A549 (cell line): ENCODE measurements at regions of chr12 and their contacts with region 1.

Region 1: DNA sequence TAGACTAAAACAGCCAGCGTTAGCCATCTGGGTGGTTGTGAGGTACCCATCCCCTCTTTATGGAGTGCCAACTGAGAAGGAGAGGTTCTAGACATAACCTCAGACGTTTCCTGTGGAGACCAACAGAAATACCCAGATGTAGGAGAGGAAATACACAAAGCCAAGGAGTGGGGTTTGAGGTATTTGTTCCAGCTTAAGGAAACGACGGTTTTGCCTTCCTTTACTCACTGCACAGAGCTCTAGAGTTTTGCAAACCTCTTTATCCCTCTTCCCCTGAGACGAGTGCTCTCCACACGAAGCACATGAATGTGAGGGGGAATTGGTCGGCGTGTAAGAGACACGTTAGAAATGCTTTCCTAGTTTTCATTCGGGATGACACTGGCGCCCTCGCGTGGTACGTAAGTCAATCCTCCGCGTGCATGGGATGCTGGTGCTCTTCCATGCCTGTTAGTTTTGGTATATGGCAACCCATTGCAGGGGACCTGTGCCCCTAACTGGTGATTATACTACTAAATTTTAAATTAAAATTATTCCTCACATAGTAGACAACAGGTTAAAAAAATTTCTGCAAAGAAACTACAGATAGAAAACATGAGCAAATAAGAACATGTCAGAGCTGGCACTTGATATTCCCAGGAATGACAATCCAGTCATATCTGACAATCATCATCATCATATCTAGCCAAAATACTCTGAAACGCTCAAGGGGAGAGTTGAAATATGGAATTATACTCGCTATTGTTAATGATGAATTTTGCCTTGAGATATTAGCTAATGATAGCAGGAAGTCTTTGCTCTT is 121.7 kb downstream of the PPM1H start:
- DNase-seq: peak; percentile 58 to 83
- ATAC-seq: peak; percentile 92 to 95
- H3K4me3 ChIP-seq: no peak overlapping the region; the same call in 2 of the 3 replicates
- H3K27ac ChIP-seq: peak overlapping the region; percentile 51 to 76; a peak in 5 of 6 replicates
- H3K4me1 ChIP-seq: peaks cover 5% of the 10 kb centered on the region; the same call in 2 of the 3 replicates
- CTCF ChIP-seq: peak; percentile 89
- EP300 ChIP-seq: no peak
- POLR2A ChIP-seq: no peak
- RAD21 ChIP-seq: peak; percentile 89 to 93

Region 2: GRCh38 chr12:62799126-62799736 is 14.0 kb before region 1 on chr12:
- CTCF ChIA-PET with region 1: interaction called, 25 read pairs
- POLR2A ChIA-PET with region 1: no interaction called
- DNase-seq: peak; percentile 60 to 83
- ATAC-seq: peak; percentile 76 to 92
- H3K4me3 ChIP-seq: no peak overlapping the region
- H3K27ac ChIP-seq: peak overlapping the region; percentile 40 to 70
- H3K4me1 ChIP-seq: peaks cover 26% of the 10 kb centered on the region
- CTCF ChIP-seq: peak; percentile 94
- EP300 ChIP-seq: no peak
- POLR2A ChIP-seq: no peak
- RAD21 ChIP-seq: peak; percentile 94 to 98

Region 3: GRCh38 chr12:62848421-62848820 is 35.2 kb after region 1 on chr12:
- CTCF ChIA-PET with region 1: interaction called, 21 read pairs
- POLR2A ChIA-PET with region 1: no interaction called
- DNase-seq: peak; percentile 57 to 82
- ATAC-seq: peak; percentile 85 to 93
- H3K4me3 ChIP-seq: no peak overlapping the region
- H3K27ac ChIP-seq: peak overlapping the region; percentile 43 to 76; a peak in 4 of 6 replicates
- H3K4me1 ChIP-seq: peaks cover 19% of the 10 kb centered on the region
- CTCF ChIP-seq: no peak
- EP300 ChIP-seq: peak in 1 of 2 experiments; percentile 35; a peak in 1 of 5 replicates
- POLR2A ChIP-seq: no peak
- RAD21 ChIP-seq: no peak

Region 4: GRCh38 chr12:62934799-62935674 is 121.8 kb after region 1 on chr12 and contains the start of gene PPM1H:
- CTCF ChIA-PET with region 1: interaction called, 26 read pairs
- POLR2A ChIA-PET with region 1: interaction called, 4 read pairs
- DNase-seq: peak; percentile 86 to 96
- ATAC-seq: peak; percentile 87 to 90
- H3K4me3 ChIP-seq: peak within 1 kb of the TSS; percentile 70
- H3K27ac ChIP-seq: peak within 1 kb of the TSS; percentile 79 to 95
- H3K4me1 ChIP-seq: peaks cover 24% of the 10 kb centered on the region
- CTCF ChIP-seq: peak; percentile 61
- EP300 ChIP-seq: no peak
- POLR2A ChIP-seq: peak; percentile 87
- RAD21 ChIP-seq: peak; percentile 30 to 43
- polyA plus RNA-seq, gene PPM1H: 7.8 and 7.9 TPM in 2 replicates